ENCODE measurements at regions of chr10 and their contacts with region 1.

Region 1: GRCh38 chr10:94412449-94412848 is 10.1 kb downstream of the TBC1D12 start:
- DNase-seq: peak; percentile 55
- H3K4me3 ChIP-seq: no peak overlapping the region
- H3K27me3 ChIP-seq: no peaks in the 10 kb centered on the region
- CTCF ChIP-seq: no peak

Region 2: DNA sequence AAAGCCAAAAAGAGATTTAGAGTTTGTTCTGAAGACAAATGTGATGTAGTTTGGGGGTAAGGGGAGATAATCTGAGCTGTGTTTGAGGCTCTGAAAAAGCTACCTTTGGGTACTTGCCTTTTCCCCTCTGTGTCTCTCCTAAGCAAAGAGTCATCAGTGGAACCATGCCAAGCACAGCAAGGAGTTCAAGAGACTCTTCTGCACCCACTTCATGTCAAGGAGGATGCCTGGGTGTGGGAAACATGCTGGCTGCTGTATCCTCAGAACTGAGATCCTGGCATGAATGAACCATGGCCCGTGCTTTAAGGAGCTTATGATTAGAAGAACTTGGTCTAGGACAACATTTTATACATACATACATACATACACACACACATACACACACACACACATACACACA is 192.6 kb before region 1 on chr10:
- CTCF ChIA-PET with region 1: no interaction called
- POLR2A ChIA-PET with region 1: no interaction called
- DNase-seq: no peak
- H3K4me3 ChIP-seq: no peak overlapping the region
- H3K27me3 ChIP-seq: peaks cover 1% of the 10 kb centered on the region; the same call in 1 of the 2 replicates
- CTCF ChIP-seq: no peak

Region 3: GRCh38 chr10:94402015-94402842 is 10.2 kb before region 1 on chr10 and contains the start of gene TBC1D12:
- CTCF ChIA-PET with region 1: interaction called, 10 read pairs
- POLR2A ChIA-PET with region 1: interaction called, 10 read pairs
- DNase-seq: peak; percentile 84
- H3K4me3 ChIP-seq: peak within 1 kb of the TSS; percentile 81
- H3K27me3 ChIP-seq: no peaks in the 10 kb centered on the region
- CTCF ChIP-seq: no peak
- polyA plus RNA-seq, gene TBC1D12: 2.3 and 3.3 TPM in 2 replicates

Region 4: GRCh38 chr10:94427166-94427565 is 14.7 kb after region 1 on chr10:
- CTCF ChIA-PET with region 1: no interaction called
- POLR2A ChIA-PET with region 1: no interaction called
- DNase-seq: no peak
- H3K4me3 ChIP-seq: no peak overlapping the region
- H3K27me3 ChIP-seq: no peaks in the 10 kb centered on the region
- CTCF ChIP-seq: no peak

Region 5: GRCh38 chr10:94439275-94439861 is 26.9 kb after region 1 on chr10:
- CTCF ChIA-PET with region 1: interaction called, 4 read pairs
- POLR2A ChIA-PET with region 1: interaction called, 17 read pairs
- DNase-seq: no peak
- H3K4me3 ChIP-seq: no peak overlapping the region
- H3K27me3 ChIP-seq: no peaks in the 10 kb centered on the region
- CTCF ChIP-seq: 0 out of 2 replicates have a peak, but pooled peaks have one; percentile 11

Region 6: DNA sequence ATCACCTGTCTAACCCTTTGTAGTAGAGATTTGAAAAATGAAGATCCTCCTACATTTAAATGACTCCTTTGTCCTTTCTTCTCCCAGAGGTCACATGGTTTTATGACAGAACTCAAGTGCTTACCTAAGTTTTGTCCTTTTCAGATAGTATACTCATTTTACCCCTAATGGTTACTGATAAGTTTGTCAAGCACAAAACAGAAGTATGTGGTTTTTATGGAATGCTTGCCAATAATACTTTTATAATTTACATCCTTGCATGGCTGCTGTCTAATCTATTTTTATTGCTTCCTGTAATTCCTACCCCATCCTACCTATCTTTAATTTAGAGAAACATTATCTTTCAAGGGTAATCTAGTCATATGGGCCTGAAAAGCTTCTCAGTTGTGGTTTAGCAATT is 170.7 kb after region 1 on chr10:
- CTCF ChIA-PET with region 1: no interaction called
- POLR2A ChIA-PET with region 1: no interaction called
- DNase-seq: no peak
- H3K4me3 ChIP-seq: no peak overlapping the region
- H3K27me3 ChIP-seq: no peaks in the 10 kb centered on the region
- CTCF ChIP-seq: no peak

Region 7: GRCh38 chr10:95360122-95360714 is 947.8 kb after region 1 on chr10:
- CTCF ChIA-PET with region 1: no interaction called
- POLR2A ChIA-PET with region 1: no interaction called
- DNase-seq: no peak
- H3K4me3 ChIP-seq: no peak overlapping the region
- H3K27me3 ChIP-seq: peaks cover 1% of the 10 kb centered on the region
- CTCF ChIP-seq: no peak

Measured in BJ (cell line).